ENCODE measurements at regions of chr1 and their contacts with region 1.

Region 1: GRCh38 chr1:40153073-40153770 is 8.0 kb upstream of the RLF start:
- DNase-seq: peak; percentile 27
- H3K4me3 ChIP-seq: no peak overlapping the region
- H3K27ac ChIP-seq: no peak overlapping the region
- H3K4me1 ChIP-seq: no peaks in the 10 kb centered on the region
- H3K27me3 ChIP-seq: no peaks in the 10 kb centered on the region
- CTCF ChIP-seq: peak; percentile 79
- EP300 ChIP-seq: no peak
- RAD21 ChIP-seq: peak; percentile 76

Region 2: GRCh38 chr1:40185951-40186864 is 33.0 kb after region 1 on chr1:
- CTCF ChIA-PET with region 1: interaction called, 19 read pairs
- POLR2A ChIA-PET with region 1: no interaction called
- DNase-seq: no peak
- H3K4me3 ChIP-seq: no peak overlapping the region
- H3K27ac ChIP-seq: peak overlapping the region in 1 of 2 experiments; percentile 11; a peak in 1 of 4 replicates
- H3K4me1 ChIP-seq: peaks cover 0 to 24% of the 10 kb centered on the region in 2 experiments; a peak in 1 of 4 replicates
- H3K27me3 ChIP-seq: no peaks in the 10 kb centered on the region
- CTCF ChIP-seq: no peak
- EP300 ChIP-seq: no peak
- RAD21 ChIP-seq: no peak

Region 3: GRCh38 chr1:40204856-40205255 is 51.6 kb after region 1 on chr1:
- CTCF ChIA-PET with region 1: interaction called, 12 read pairs
- POLR2A ChIA-PET with region 1: no interaction called
- DNase-seq: no peak
- H3K4me3 ChIP-seq: no peak overlapping the region
- H3K27ac ChIP-seq: no peak overlapping the region
- H3K4me1 ChIP-seq: no peaks in the 10 kb centered on the region
- H3K27me3 ChIP-seq: no peaks in the 10 kb centered on the region
- CTCF ChIP-seq: no peak
- EP300 ChIP-seq: no peak
- RAD21 ChIP-seq: no peak

Region 4: GRCh38 chr1:40363721-40364120 is 210.5 kb after region 1 on chr1:
- CTCF ChIA-PET with region 1: interaction called, 13 read pairs
- POLR2A ChIA-PET with region 1: interaction called, 3 read pairs
- DNase-seq: no peak
- H3K4me3 ChIP-seq: no peak overlapping the region
- H3K27ac ChIP-seq: no peak overlapping the region
- H3K4me1 ChIP-seq: peaks cover 4 to 10% of the 10 kb centered on the region in 2 experiments; a peak in 2 of 4 replicates
- H3K27me3 ChIP-seq: no peaks in the 10 kb centered on the region
- CTCF ChIP-seq: 0 out of 2 replicates have a peak, but pooled peaks have one; percentile 8
- EP300 ChIP-seq: no peak
- RAD21 ChIP-seq: no peak

Region 5: GRCh38 chr1:40404670-40405462 is 251.6 kb after region 1 on chr1:
- CTCF ChIA-PET with region 1: interaction called, 56 read pairs
- POLR2A ChIA-PET with region 1: no interaction called
- DNase-seq: peak; percentile 49
- H3K4me3 ChIP-seq: no peak overlapping the region; a peak in 1 of 4 replicates
- H3K27ac ChIP-seq: no peak overlapping the region
- H3K4me1 ChIP-seq: no peaks in the 10 kb centered on the region; a peak in 2 of 4 replicates
- H3K27me3 ChIP-seq: no peaks in the 10 kb centered on the region
- CTCF ChIP-seq: peak; percentile 94
- EP300 ChIP-seq: no peak
- RAD21 ChIP-seq: peak; percentile 89